Activated naive CD4-positive, alpha-beta T cell treated with anti-CD3 and anti-CD28 coated beads, Interleukin-2, amount 10 ng/mL, durations not matched to agents 7 days and 5 days (primary cell): ENCODE measurements at regions of chr11 and their contacts with region 1.

Region 1: DNA sequence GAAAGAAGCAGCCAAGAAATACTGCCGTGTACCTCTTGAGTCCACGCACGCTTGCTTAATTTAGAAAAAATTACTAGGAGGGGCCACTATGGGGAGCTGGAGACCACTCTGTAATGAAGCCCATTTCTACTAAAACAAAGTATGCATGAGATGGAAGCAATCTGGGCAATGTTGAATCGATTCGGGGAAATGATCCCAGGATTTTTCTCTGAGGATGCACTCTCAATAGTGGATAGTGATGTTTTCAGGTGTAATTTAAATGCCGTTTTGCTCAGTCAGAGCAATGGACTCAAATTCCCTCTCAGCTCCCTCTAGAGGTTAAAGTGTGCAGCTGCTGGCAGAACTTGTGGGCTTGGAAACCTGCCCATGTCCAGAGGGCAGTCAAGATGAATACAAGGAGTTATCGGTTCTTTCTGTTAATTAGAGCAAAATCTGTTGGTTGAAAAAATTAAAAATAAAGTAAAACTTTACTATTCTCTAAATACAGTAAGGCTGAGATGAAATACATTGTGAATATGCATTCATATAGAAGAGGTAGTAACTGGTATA is 64.1 kb downstream of the ME3 start:
- DNase-seq: peak; percentile 53
- H3K4me3 Mint-ChIP-seq: no peak overlapping the region
- H3K27ac Mint-ChIP-seq: no peak overlapping the region
- H3K4me1 Mint-ChIP-seq: peaks cover 2% of the 10 kb centered on the region
- H3K27me3 Mint-ChIP-seq: no peaks in the 10 kb centered on the region

Region 2: DNA sequence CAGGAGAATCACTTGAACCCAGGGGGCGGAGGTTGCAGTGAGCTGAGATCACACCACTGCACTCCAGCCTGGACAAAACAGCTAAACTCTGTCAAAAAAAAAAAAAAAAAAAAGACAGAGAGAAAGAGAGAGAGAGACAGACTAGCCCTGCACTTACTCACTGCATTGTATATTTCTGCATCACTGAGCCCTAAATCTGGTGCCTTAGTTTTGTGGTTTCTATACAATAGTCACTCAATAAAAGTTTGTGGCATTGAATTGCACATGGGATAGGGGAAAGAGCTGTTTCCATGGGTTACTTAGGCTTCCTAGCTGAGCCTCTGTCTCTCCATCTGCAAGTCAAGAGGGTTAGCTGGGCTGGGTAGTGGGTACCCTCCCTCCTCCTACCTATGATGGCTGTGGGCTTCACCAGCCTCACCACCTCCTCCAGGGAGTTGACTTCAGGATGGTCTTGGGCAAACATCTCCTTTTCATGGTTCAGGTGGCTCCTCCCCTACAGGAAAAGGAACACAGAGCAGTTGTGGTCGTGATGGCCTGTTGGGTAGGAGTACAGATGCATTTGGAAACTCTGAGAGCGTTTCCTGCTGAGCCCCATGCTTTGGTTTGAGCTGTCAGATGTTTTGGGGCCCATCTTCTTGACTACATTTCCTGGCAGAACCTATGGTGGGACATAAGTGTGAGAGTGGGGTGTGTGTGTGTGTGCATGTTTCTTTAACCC is 160.4 kb before region 1 on chr11:
- CTCF ChIA-PET with region 1: interaction called, 13 read pairs
- DNase-seq: peak; percentile 40
- H3K4me3 Mint-ChIP-seq: no peak overlapping the region
- H3K27ac Mint-ChIP-seq: peak overlapping the region; percentile 13
- H3K4me1 Mint-ChIP-seq: peaks cover 12% of the 10 kb centered on the region
- H3K27me3 Mint-ChIP-seq: no peaks in the 10 kb centered on the region

Region 3: GRCh38 chr11:86456052-86456939 is 152.0 kb before region 1 on chr11:
- CTCF ChIA-PET with region 1: interaction called, 50 read pairs
- DNase-seq: peak; percentile 85
- H3K4me3 Mint-ChIP-seq: no peak overlapping the region
- H3K27ac Mint-ChIP-seq: no peak overlapping the region
- H3K4me1 Mint-ChIP-seq: no peaks in the 10 kb centered on the region
- H3K27me3 Mint-ChIP-seq: no peaks in the 10 kb centered on the region

Region 4: GRCh38 chr11:86592659-86593451 is 15.5 kb before region 1 on chr11:
- CTCF ChIA-PET with region 1: interaction called, 26 read pairs
- DNase-seq: peak; percentile 77
- H3K4me3 Mint-ChIP-seq: no peak overlapping the region
- H3K27ac Mint-ChIP-seq: peak overlapping the region; percentile 46
- H3K4me1 Mint-ChIP-seq: peaks cover 23% of the 10 kb centered on the region
- H3K27me3 Mint-ChIP-seq: no peaks in the 10 kb centered on the region